ENCODE measurements at regions of chr5 and their contacts with region 1.

Region 1: GRCh38 chr5:177446200-177447065 is at the start of gene PRR7:
- DNase-seq: peak; percentile 77
- ATAC-seq: peak; percentile 58
- H3K4me3 Mint-ChIP-seq: peak within 1 kb of the TSS; percentile 79
- H3K27ac Mint-ChIP-seq: peak within 1 kb of the TSS; percentile 80
- H3K4me1 Mint-ChIP-seq: peaks cover 43% of the 10 kb centered on the region
- H3K27me3 Mint-ChIP-seq: no peaks in the 10 kb centered on the region
- CTCF ChIP-seq: no peak
- total RNA-seq, gene PRR7: 32.6 to 36.4 TPM

Region 2: GRCh38 chr5:177412603-177413233 is 33.7 kb before region 1 on chr5:
- CTCF ChIA-PET with region 1: interaction called, 415 read pairs
- POLR2A ChIA-PET with region 1: interaction called, 13 read pairs
- intact Hi-C with region 1: no loop called
- DNase-seq: peak; percentile 46
- ATAC-seq: peak; percentile 82
- H3K4me3 Mint-ChIP-seq: peak overlapping the region; percentile 18
- H3K27ac Mint-ChIP-seq: peak overlapping the region; percentile 70
- H3K4me1 Mint-ChIP-seq: peaks cover 40% of the 10 kb centered on the region
- H3K27me3 Mint-ChIP-seq: no peaks in the 10 kb centered on the region
- CTCF ChIP-seq: no peak

Measured in activated CD8-positive, alpha-beta T cell treated with anti-CD3 and anti-CD28 coated beads for 36 hours (primary cell).